PC-3 (cell line): ENCODE measurements at regions of chr3 and their contacts with region 1.

Region 1: DNA sequence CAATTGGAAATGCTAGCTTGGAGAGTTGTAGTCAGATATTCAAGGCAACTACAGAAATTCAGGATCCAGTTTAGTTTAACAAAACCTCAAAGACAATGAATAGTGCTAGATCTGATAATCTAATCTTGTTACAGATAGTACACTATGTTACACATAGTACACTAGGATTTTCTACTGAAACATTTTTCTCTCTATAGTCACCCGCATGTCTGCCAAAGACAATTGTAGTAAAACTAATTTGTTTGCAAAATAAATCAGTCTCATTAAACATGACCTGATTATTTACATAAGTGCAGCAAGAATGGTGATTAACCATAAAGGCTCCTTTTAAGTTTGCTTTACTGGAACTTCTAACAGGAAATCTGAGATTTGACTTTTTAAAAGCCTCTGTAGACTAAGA is 52.0 kb downstream of the ILDR1 start:
- DNase-seq: peak; percentile 97
- ATAC-seq: peak; percentile 89
- H3K4me3 ChIP-seq: peak overlapping the region; percentile 12; the same call in 1 of the 2 replicates
- H3K27ac ChIP-seq: peak overlapping the region; percentile 72
- H3K4me1 ChIP-seq: peaks cover 41% of the 10 kb centered on the region
- H3K27me3 ChIP-seq: no peaks in the 10 kb centered on the region
- CTCF ChIP-seq: no peak

Region 2: GRCh38 chr3:121942116-121942788 is 27.8 kb before region 1 on chr3:
- CTCF ChIA-PET with region 1: no interaction called
- POLR2A ChIA-PET with region 1: no interaction called
- intact Hi-C with region 1: loop called (anchors 2 kb)
- DNase-seq: peak; percentile 87
- ATAC-seq: peak; percentile 59
- H3K4me3 ChIP-seq: peak overlapping the region; percentile 26; the same call in 1 of the 2 replicates
- H3K27ac ChIP-seq: peak overlapping the region; percentile 27
- H3K4me1 ChIP-seq: peaks cover 38% of the 10 kb centered on the region
- H3K27me3 ChIP-seq: no peaks in the 10 kb centered on the region
- CTCF ChIP-seq: no peak